ENCODE measurements at regions of chr22 and their contacts with region 1.

Region 1: DNA sequence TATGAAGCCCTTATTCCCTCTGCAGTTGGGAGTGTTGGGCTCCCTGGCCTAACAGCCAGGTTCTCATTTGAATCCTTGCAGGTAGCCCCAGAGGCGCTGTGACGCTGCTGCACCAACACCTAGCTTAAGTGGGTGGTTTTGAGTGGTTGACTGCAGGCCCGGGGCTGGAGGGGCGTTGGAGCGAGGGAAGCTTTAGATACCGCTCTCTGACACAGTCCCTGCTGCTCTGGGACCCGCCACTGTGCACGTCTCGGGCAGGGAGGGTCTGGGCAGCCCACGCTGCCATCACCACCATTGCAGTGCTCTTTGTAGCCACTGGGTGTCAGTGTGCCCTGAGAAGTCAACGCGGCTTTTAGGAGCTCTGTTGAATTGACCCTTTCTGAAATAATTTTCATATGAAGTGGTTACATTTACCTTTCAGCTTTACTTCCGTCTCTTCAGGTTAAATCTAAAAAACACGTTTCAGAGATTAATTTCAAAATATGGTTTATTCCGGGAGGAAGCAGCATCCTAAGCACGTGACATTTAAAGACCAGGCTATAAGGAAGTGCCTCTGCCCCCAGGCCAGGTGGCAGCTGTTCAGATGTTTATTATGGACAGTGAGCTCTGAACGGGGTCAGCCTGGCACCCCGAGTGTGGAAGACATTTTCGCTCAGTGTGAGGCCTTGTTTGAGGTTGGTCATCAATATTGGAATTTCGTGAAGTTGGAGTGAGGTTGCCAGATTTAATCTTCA is 30.9 kb upstream of the PARVB start:
- DNase-seq: peak; percentile 46 to 56
- ATAC-seq: peak; percentile 53 to 85 (median 74)
- H3K4me3 ChIP-seq: no peak overlapping the region
- H3K27ac ChIP-seq: no peak overlapping the region
- H3K4me1 ChIP-seq: peaks cover 0 to 33% (median 18%) of the 10 kb centered on the region in 9 donors
- H3K27me3 ChIP-seq: no peaks in the 10 kb centered on the region
- CTCF ChIP-seq: peak in 8 of 9 donors; percentile 93 to 98 (median 96)

Region 2: DNA sequence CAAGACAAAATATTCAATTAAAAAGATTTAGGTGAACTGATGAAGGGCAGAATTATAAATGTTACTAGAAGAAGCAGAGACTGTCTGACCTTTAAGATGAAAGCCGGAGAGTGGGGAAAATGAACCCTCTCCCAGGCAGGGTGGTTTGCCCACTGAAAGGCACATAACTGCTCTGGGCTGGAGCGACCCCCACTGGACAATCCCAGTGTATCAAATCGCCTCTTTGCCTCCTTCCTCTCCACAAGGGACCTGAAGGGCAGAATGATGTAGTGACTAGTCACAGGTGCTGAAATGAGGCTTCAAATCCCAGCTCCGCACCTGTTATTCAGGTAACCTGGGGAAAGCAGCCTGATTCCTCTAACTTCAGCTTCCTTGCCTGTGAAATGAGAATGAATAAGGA is 250.1 kb before region 1 on chr22:
- intact Hi-C with region 1: no loop called
- DNase-seq: no peak
- ATAC-seq: no peak
- H3K4me3 ChIP-seq: no peak overlapping the region
- H3K27ac ChIP-seq: no peak overlapping the region
- H3K4me1 ChIP-seq: peaks cover 0 to 30% (median 9%) of the 10 kb centered on the region in 9 donors
- H3K27me3 ChIP-seq: peaks cover 0 to 14% (median 0%) of the 10 kb centered on the region in 7 donors
- CTCF ChIP-seq: no peak

Region 3: DNA sequence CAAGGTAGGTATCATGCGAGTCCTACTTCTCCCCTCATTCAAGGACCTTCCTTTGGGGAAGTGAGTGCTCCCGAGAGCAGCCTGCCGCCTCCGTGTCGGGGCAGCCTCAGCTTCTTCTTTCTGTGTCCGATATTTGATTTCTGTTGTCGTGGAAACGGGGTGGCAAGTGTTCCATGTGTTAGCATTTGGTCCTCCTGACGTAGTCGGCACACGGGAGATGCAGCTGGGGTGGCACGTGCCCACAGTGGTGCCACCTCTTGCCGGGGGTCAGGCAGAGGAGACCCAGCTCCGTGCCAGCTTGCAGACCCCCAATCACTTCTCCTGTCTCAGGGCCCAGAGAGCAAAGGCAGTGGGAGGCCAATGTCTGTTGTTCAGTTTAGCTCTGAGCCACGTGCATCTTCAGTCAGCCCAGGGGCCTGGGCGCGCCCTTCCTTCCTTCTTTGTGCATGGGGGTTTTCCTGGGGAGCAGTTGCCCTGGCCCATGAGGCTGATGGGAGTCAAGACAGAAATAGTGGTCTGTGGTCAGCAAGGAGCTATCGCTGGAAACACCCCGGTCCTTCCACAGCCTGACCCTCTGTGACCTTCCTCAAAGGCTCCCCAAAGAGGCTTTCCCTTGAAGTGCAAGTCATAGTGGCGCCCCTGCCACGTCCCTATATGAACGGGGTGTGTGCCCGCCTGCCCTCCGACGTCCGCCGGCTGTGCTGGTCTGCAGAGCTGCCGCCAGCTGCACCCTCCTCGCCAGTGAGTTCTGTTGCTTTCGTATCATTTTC is 75.4 kb after region 1 on chr22:
- intact Hi-C with region 1: no loop called
- DNase-seq: peak; percentile 30 to 37
- ATAC-seq: peak; percentile 31 to 73 (median 56)
- H3K4me3 ChIP-seq: no peak overlapping the region
- H3K27ac ChIP-seq: peak overlapping the region in 9 of 10 donors; percentile 15 to 69 (median 43)
- H3K4me1 ChIP-seq: peaks cover 0 to 49% (median 36%) of the 10 kb centered on the region in 9 donors
- H3K27me3 ChIP-seq: no peaks in the 10 kb centered on the region
- CTCF ChIP-seq: no peak

Region 4: DNA sequence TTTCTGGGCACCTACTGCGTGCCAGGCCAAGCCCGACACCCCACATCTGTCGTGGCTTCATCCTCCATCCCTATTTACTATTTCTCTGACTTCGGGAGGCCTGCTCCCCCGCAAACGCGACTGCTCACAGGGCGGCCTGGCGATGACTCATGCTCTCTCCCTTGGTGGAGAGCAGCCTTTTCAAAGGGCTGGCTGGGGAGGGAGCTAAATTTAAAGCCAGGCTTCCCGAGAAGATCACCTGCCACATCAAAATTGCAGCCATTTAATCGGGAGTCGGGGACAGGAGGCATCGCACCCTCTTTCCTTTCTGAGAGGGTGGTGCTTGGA is 344.4 kb after region 1 on chr22:
- intact Hi-C with region 1: loop called in 3 of 10 experiments (anchors 10 kb)
- DNase-seq: peak in 1 of 2 donors; percentile 36
- ATAC-seq: peak in 7 of 8 donors; percentile 41 to 75 (median 57)
- H3K4me3 ChIP-seq: no peak overlapping the region
- H3K27ac ChIP-seq: no peak overlapping the region
- H3K4me1 ChIP-seq: peaks cover 0 to 25% (median 8%) of the 10 kb centered on the region in 9 donors
- H3K27me3 ChIP-seq: peaks cover 0 to 23% (median 10%) of the 10 kb centered on the region in 7 donors
- CTCF ChIP-seq: no peak

Region 5: DNA sequence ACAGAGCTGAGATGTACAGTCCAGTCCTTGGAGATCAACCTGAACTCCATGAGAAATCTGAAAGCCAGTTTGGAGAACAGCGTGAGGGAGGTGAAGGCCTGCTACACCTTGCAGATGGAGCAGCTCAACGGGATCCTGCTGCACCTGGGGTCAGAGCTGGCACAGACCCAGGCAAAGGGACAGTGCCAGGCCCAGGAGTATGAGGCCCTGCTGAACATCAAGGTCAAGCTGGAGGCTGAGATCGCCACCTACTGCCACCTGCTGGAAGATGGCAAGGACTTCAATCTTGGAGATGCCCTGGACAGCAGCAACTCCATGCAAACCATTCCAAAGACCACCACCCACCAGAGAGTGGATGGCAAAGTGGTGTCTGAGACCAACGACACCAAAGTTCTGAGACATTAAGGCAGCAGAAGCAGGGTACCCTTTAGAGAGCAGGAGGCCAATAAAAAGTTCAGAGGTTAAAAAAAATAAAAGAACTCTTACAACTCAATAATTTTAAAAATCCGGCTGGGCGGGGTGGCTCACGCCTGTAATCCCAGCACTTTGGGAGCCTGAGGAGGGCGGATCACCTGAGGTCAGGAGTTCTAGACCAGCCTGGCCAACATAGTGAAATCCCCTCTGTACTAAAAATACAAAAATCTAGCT is 574.8 kb after region 1 on chr22:
- intact Hi-C with region 1: loop called in 1 of 10 experiments (anchors 10 kb)
- DNase-seq: peak in 1 of 2 donors; percentile 30
- ATAC-seq: no peak
- H3K4me3 ChIP-seq: no peak overlapping the region
- H3K27ac ChIP-seq: no peak overlapping the region
- H3K4me1 ChIP-seq: peaks cover 0 to 9% (median 0%) of the 10 kb centered on the region in 9 donors
- H3K27me3 ChIP-seq: no peaks in the 10 kb centered on the region
- CTCF ChIP-seq: peak in 8 of 9 donors; percentile 21 to 67 (median 52)

Region 6: GRCh38 chr22:44625981-44626687 is 632.9 kb after region 1 on chr22:
- intact Hi-C with region 1: loop called (anchors 1 to 5 kb)
- DNase-seq: peak; percentile 63 to 76
- ATAC-seq: peak; percentile 58 to 85 (median 70)
- H3K4me3 ChIP-seq: no peak overlapping the region
- H3K27ac ChIP-seq: no peak overlapping the region
- H3K4me1 ChIP-seq: peaks cover 0 to 5% (median 0%) of the 10 kb centered on the region in 9 donors
- H3K27me3 ChIP-seq: peaks cover 0 to 23% (median 5%) of the 10 kb centered on the region in 7 donors
- CTCF ChIP-seq: peak; percentile 94 to 98 (median 97)